Transverse colon (tissue), 4 donors: ENCODE measurements at regions of chr3 and their contacts with region 1.

Region 1: GRCh38 chr3:63349583-63350521 is 71.7 kb downstream of the SYNPR start:
- DNase-seq: peak; percentile 56
- H3K4me3 ChIP-seq: no peak overlapping the region
- H3K27ac ChIP-seq: no peak overlapping the region
- H3K4me1 ChIP-seq: peaks cover 0 to 26% (median 5%) of the 10 kb centered on the region in 4 donors
- H3K27me3 ChIP-seq: no peaks in the 10 kb centered on the region
- CTCF ChIP-seq: peak; percentile 59 to 79 (median 70)
- EP300 ChIP-seq: no peak
- POLR2A ChIP-seq: no peak

Region 2: GRCh38 chr3:63557912-63558311 is 208.1 kb after region 1 on chr3:
- in situ Hi-C with region 1: loop called in 1 of 4 experiments (anchors 25 kb)
- intact Hi-C with region 1: no loop called
- DNase-seq: no peak
- H3K4me3 ChIP-seq: no peak overlapping the region
- H3K27ac ChIP-seq: no peak overlapping the region
- H3K4me1 ChIP-seq: peaks cover 0 to 12% (median 5%) of the 10 kb centered on the region in 4 donors
- H3K27me3 ChIP-seq: no peaks in the 10 kb centered on the region
- CTCF ChIP-seq: no peak
- EP300 ChIP-seq: no peak
- POLR2A ChIP-seq: no peak

Region 3: DNA sequence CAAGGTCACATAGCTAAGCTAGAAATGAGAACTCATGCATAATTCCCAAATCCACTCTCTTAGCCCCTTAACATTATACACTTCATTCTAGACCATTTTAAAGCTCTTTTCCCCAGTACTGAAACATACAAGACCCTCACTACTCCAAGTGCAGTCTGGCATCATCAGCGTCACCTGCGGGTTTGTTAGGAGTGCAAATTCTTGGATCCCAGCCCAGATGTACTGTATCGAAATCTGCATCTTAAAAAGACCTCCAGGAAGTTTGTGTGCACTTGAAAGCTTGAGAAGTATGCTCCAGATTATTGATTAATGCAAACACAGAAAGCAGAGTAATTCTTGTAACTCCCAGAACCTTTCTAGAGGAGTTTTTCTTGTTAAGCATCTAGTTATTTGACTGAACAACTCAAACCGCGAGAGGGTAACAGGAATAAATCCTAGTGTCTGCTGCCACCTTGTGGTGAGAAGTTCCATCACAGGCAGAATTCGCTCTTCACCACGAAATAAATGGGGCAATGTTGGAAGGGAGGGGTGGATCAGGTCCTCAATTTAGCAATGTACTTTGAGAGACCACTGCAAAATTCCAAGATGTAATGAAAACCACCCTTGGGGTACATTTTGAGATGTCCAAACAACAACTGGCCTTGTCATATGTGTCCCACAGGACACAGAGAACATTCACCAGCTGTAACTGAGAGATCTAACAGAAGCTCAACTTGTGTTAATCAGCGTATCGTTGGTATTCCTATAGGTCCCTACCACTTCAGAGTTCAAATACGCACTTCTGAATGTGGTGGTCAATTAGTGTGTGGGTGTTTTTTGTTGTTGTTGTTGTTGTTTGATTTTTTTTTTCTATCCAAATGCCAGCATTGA is 468.7 kb after region 1 on chr3:
- in situ Hi-C with region 1: loop called (anchors 5 to 10 kb)
- intact Hi-C with region 1: loop called (anchors 5 kb)
- DNase-seq: peak; percentile 60
- H3K4me3 ChIP-seq: no peak overlapping the region
- H3K27ac ChIP-seq: no peak overlapping the region
- H3K4me1 ChIP-seq: peaks cover 0 to 4% (median 2%) of the 10 kb centered on the region in 4 donors
- H3K27me3 ChIP-seq: no peaks in the 10 kb centered on the region
- CTCF ChIP-seq: peak; percentile 84 to 92 (median 87)
- EP300 ChIP-seq: no peak
- POLR2A ChIP-seq: no peak

Region 4: DNA sequence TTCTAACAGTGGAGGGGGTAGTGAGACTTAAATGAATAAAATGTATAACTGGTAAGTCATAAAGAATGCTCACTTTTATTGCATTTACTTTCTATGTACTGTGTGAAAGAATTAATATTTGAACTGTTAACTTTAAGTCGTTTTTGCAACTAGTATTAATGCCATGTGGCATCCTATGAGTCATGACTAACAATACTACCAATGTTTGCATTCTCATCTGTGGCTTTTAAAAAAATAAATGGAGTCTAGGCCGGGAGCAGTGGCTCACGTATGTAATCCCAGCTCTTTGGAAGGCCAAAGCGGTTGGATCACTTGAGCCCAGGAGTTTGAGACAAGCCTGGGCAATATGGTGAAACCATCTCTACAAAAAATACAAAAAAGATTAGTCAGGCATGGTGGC is 474.5 kb after region 1 on chr3:
- in situ Hi-C with region 1: loop called (anchors 5 to 10 kb)
- intact Hi-C with region 1: loop called (anchors 5 kb)
- DNase-seq: no peak
- H3K4me3 ChIP-seq: no peak overlapping the region
- H3K27ac ChIP-seq: no peak overlapping the region
- H3K4me1 ChIP-seq: no peaks in the 10 kb centered on the region
- H3K27me3 ChIP-seq: no peaks in the 10 kb centered on the region
- CTCF ChIP-seq: no peak
- EP300 ChIP-seq: no peak
- POLR2A ChIP-seq: no peak